Panc1 (cell line): ENCODE measurements at regions of chr2 and their contacts with region 1.

Region 1: GRCh38 chr2:96856776-96857673 is 791 bp downstream of the ANKRD39 start:
- DNase-seq: no peak
- ATAC-seq: peak; percentile 5
- H3K4me3 ChIP-seq: peak overlapping the region; percentile 73
- H3K27ac ChIP-seq: peak overlapping the region; percentile 80
- H3K4me1 ChIP-seq: peaks cover 15% of the 10 kb centered on the region
- H3K27me3 ChIP-seq: no peaks in the 10 kb centered on the region
- CTCF ChIP-seq: no peak

Region 2: DNA sequence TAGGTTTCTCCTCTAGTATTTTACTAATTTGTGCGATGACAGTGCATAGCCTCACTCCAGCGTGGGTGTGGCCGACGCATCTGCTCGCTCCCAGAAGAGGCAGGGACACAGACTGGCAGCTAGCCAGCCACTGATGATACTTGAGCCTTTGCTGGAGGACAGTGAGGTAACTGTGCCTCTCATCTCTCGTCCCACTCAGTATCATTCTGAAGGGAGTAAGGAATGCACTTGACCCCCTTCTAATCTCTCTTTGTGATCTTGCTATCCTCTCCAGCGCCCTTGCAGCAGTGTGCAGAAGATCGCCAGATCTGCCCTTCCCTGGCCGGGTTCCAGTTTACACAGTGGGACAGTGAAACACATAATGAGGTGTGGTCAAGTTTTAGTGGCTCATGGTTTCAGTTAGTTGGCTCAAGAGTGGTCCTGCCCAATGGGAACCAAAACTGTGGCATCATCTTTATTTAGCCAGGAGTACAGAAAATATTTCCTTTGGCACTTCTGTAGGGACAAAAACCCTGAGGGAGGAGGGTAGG is 503.9 kb before region 1 on chr2:
- CTCF ChIA-PET with region 1: no interaction called
- POLR2A ChIA-PET with region 1: no interaction called
- in situ Hi-C with region 1: no loop called
- intact Hi-C with region 1: no loop called
- DNase-seq: no peak
- ATAC-seq: no peak
- H3K4me3 ChIP-seq: no peak overlapping the region
- H3K27ac ChIP-seq: no peak overlapping the region
- H3K4me1 ChIP-seq: no peaks in the 10 kb centered on the region
- H3K27me3 ChIP-seq: no peaks in the 10 kb centered on the region
- CTCF ChIP-seq: no peak

Region 3: DNA sequence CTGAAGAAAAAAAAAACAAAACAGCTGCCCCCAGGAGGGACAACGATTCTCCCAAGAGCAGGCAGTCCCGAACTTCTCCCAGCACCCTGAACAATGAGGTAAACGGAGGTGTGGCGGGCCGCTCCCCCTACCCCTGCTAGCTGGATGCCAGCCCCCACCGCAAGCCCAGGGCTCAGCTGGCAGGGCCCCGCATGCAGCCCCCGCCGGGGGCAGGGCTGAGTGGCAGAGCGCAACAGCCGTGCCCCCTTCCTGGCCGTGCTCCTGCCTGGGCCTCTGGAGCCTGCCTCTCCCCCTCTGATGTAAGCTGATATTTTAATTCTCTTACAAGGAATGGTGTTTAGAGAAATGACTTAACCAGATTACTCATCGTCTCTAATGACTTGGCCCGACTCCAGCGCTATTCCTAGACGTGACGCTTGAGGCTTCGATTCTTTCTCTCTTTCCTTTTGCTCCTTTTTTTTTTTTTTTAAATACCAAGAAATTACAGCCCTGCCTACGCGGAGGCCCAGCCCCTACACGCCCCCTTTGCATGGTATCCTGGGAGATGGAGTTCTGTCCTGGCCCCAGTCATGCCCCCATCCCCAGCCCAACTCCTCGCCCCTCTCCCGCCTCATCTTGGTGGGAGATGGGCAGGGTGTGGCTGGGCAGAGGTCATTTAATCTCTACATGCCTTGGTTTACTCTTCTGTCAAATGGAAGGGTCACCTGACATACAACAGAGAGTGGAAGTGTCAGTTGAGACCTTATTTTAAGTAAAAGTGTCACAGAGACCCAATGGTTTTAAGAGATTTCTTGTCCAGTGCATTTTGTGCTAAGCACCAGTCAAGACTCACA is 324.9 kb before region 1 on chr2:
- CTCF ChIA-PET with region 1: no interaction called
- POLR2A ChIA-PET with region 1: no interaction called
- in situ Hi-C with region 1: no loop called
- intact Hi-C with region 1: no loop called
- DNase-seq: peak; percentile 90
- ATAC-seq: peak; percentile 24; the same call in 1 of the 2 replicates
- H3K4me3 ChIP-seq: peak overlapping the region; percentile 21 to 51
- H3K27ac ChIP-seq: peak overlapping the region; percentile 77; the same call in 1 of the 2 replicates
- H3K4me1 ChIP-seq: peaks cover 63% of the 10 kb centered on the region
- H3K27me3 ChIP-seq: no peaks in the 10 kb centered on the region
- CTCF ChIP-seq: no peak

Region 4: GRCh38 chr2:96773922-96774321 is 83.1 kb before region 1 on chr2:
- CTCF ChIA-PET with region 1: interaction called, 12 read pairs
- POLR2A ChIA-PET with region 1: no interaction called
- in situ Hi-C with region 1: no loop called
- intact Hi-C with region 1: no loop called
- DNase-seq: no peak
- ATAC-seq: peak; percentile 40; the same call in 1 of the 2 replicates
- H3K4me3 ChIP-seq: peak overlapping the region; percentile 22 to 51
- H3K27ac ChIP-seq: peak overlapping the region; percentile 74
- H3K4me1 ChIP-seq: peaks cover 31% of the 10 kb centered on the region
- H3K27me3 ChIP-seq: no peaks in the 10 kb centered on the region
- CTCF ChIP-seq: no peak

Region 5: DNA sequence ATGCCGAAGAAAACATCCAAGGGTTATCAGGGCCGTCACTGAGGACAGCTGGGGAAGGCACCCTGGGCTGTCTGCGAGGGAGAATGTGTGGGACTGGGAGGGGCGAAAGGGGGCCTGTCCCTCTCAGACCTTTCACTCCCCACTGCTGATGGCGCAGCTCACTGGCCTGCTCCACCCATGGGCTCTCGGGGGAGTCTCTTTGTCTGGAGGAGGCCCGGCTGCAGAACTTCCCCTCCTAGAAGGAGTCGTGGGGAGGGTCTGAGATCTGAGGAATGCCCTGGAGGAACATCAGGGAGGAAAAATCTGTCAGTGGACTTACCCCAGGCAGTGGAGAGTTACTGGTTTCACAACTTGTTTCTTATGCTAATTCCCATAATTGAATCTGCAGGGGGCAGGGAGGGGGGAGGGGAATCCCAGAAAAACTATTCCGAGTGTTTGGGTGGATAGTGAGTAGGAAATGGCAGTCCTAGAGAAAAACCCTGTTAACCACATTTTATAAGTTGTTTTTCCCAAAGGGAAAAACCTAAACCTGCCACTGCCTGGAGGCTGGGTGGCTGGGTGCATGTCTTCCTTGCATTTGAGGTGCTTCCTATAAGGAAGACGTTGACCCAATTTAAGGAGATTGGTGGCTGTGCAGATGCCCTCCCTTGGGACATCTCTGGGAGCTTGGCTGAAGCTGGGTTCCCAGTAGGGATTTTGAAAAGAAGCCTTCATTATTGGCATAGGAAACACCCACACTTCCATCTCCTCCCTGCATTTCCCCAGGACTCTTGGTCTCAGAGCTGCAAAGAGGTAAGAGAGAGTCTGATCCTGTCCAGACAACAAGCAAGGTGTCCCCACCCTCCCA is 24.5 kb after region 1 on chr2:
- CTCF ChIA-PET with region 1: no interaction called
- POLR2A ChIA-PET with region 1: interaction called, 29 read pairs
- in situ Hi-C with region 1: no loop called
- intact Hi-C with region 1: no loop called
- DNase-seq: no peak
- ATAC-seq: no peak
- H3K4me3 ChIP-seq: no peak overlapping the region
- H3K27ac ChIP-seq: no peak overlapping the region
- H3K4me1 ChIP-seq: no peaks in the 10 kb centered on the region
- H3K27me3 ChIP-seq: no peaks in the 10 kb centered on the region
- CTCF ChIP-seq: no peak

Region 6: GRCh38 chr2:96954011-96954846 is 97.2 kb after region 1 on chr2:
- CTCF ChIA-PET with region 1: interaction called, 8 read pairs
- POLR2A ChIA-PET with region 1: no interaction called
- in situ Hi-C with region 1: no loop called
- intact Hi-C with region 1: loop called (anchors 2 kb)
- DNase-seq: no peak
- ATAC-seq: no peak
- H3K4me3 ChIP-seq: no peak overlapping the region
- H3K27ac ChIP-seq: no peak overlapping the region
- H3K4me1 ChIP-seq: no peaks in the 10 kb centered on the region
- H3K27me3 ChIP-seq: no peaks in the 10 kb centered on the region
- CTCF ChIP-seq: no peak

Region 7: GRCh38 chr2:96964221-96965027 is 107.4 kb after region 1 on chr2:
- CTCF ChIA-PET with region 1: interaction called, 3 read pairs
- POLR2A ChIA-PET with region 1: interaction called, 13 read pairs
- in situ Hi-C with region 1: no loop called
- intact Hi-C with region 1: no loop called
- DNase-seq: no peak
- ATAC-seq: no peak
- H3K4me3 ChIP-seq: no peak overlapping the region
- H3K27ac ChIP-seq: no peak overlapping the region
- H3K4me1 ChIP-seq: no peaks in the 10 kb centered on the region
- H3K27me3 ChIP-seq: no peaks in the 10 kb centered on the region
- CTCF ChIP-seq: no peak

Region 8: DNA sequence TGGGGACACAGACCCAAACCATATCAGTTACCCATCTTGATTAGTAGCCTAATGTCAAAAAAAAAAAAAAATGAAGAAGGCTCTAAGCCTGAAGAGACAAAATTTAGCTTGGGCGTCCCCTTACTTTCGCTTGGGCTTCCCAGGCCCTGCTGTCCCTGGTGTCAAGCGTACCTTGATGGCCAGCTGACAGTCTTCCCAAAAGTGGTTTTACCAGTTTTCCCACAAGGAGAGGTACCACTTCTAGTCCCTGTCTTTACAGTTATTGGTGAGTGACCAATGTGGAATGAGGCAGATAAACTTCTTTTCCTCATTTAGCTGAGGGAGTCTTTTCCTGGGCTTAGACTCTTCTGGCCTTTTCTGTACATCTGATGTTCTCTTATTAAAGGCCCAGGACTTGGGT is 135.2 kb after region 1 on chr2:
- CTCF ChIA-PET with region 1: no interaction called
- POLR2A ChIA-PET with region 1: no interaction called
- in situ Hi-C with region 1: no loop called
- intact Hi-C with region 1: no loop called
- DNase-seq: no peak
- ATAC-seq: no peak
- H3K4me3 ChIP-seq: no peak overlapping the region
- H3K27ac ChIP-seq: no peak overlapping the region
- H3K4me1 ChIP-seq: no peaks in the 10 kb centered on the region
- H3K27me3 ChIP-seq: no peaks in the 10 kb centered on the region; the same call in 1 of the 2 replicates
- CTCF ChIP-seq: no peak

Region 9: GRCh38 chr2:97210325-97210724 is 353.3 kb after region 1 on chr2:
- CTCF ChIA-PET with region 1: no interaction called
- POLR2A ChIA-PET with region 1: no interaction called
- in situ Hi-C with region 1: no loop called
- intact Hi-C with region 1: no loop called
- DNase-seq: no peak
- ATAC-seq: no peak
- H3K4me3 ChIP-seq: no peak overlapping the region
- H3K27ac ChIP-seq: no peak overlapping the region
- H3K4me1 ChIP-seq: no peaks in the 10 kb centered on the region
- H3K27me3 ChIP-seq: no peaks in the 10 kb centered on the region
- CTCF ChIP-seq: no peak